ENCODE measurements at regions of chr3 and their contacts with region 1.

Region 1: DNA sequence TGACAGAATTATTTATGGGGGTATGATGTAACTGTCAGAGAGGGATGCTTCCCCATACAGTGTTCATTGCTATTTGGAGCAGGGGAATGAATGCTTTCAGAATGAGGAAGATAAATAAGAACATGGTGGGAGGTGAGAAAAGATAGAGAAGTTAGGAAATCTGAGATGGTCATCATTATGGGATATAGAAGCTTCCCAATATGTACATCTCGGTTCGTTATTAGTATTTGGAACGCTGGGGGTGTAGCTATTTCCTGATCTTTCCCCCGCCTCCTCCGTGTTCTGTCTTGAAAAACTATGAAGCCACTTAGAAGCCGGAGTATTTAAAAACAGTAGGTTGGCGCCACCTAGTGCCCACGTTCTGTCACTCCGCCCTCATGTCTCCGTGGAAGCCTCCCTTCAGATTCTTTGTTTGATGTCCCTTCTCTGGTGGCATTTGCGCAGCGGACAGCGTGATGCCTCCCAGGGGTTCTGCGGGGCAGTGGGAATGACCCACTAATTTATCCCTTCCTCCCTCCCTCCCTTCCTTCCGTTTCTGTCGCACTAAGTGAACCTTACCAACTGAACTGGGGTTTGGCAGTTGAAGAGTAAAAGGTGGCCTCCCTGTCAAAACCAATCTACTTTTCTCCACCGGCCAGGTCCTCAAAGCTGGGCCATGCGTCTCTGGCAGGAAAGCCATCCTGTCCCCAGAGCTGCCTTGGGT is 184.5 kb downstream of the FEZF2 start:
- DNase-seq: peak; percentile 7
- ATAC-seq: peak; percentile 93
- H3K4me3 ChIP-seq: no peak overlapping the region
- H3K27ac ChIP-seq: no peak overlapping the region
- H3K4me1 ChIP-seq: no peaks in the 10 kb centered on the region
- H3K27me3 ChIP-seq: no peaks in the 10 kb centered on the region
- CTCF ChIP-seq: peak; percentile 54 to 85 (median 70); a peak in 5 of 6 replicates
- POLR2A ChIP-seq: no peak
- RAD21 ChIP-seq: peak; percentile 84

Region 2: DNA sequence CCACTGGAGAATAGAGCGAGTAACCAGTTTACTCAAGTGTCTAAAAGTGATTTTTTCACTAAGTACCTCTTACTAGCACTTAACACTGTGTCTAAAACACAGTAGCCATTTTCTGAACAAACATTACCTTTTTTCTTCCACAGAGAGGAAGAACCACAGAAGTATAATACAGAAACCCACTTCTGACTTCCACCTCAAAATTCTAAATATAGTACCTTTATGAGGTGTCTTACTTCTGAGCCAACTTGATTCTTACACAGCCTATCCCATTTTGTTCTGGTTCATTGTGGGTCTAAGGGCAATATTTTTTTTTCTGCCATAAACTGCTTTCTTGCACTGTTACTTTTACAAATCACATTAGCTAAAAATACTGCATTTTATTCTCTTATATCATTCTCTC is 1758.6 kb before region 1 on chr3:
- CTCF ChIA-PET with region 1: no interaction called
- POLR2A ChIA-PET with region 1: no interaction called
- RAD21 ChIA-PET with region 1: no interaction called
- intact Hi-C with region 1: no loop called
- DNase-seq: no peak
- ATAC-seq: no peak
- H3K4me3 ChIP-seq: no peak overlapping the region
- H3K27ac ChIP-seq: no peak overlapping the region
- H3K4me1 ChIP-seq: no peaks in the 10 kb centered on the region
- H3K27me3 ChIP-seq: no peaks in the 10 kb centered on the region
- CTCF ChIP-seq: no peak
- POLR2A ChIP-seq: no peak
- RAD21 ChIP-seq: no peak

Region 3: GRCh38 chr3:61381745-61382392 is 807.0 kb before region 1 on chr3:
- CTCF ChIA-PET with region 1: interaction called, 6 read pairs
- POLR2A ChIA-PET with region 1: no interaction called
- RAD21 ChIA-PET with region 1: interaction called in 1 of 2 experiments, 3 read pairs
- intact Hi-C with region 1: loop called (anchors 5 kb)
- DNase-seq: peak; percentile 48
- ATAC-seq: peak; percentile 98
- H3K4me3 ChIP-seq: no peak overlapping the region
- H3K27ac ChIP-seq: no peak overlapping the region
- H3K4me1 ChIP-seq: no peaks in the 10 kb centered on the region
- H3K27me3 ChIP-seq: peaks cover 9% of the 10 kb centered on the region; the same call in 1 of the 2 replicates
- CTCF ChIP-seq: peak; percentile 37 to 86 (median 59); a peak in 5 of 6 replicates
- POLR2A ChIP-seq: no peak
- RAD21 ChIP-seq: peak; percentile 67

Region 4: DNA sequence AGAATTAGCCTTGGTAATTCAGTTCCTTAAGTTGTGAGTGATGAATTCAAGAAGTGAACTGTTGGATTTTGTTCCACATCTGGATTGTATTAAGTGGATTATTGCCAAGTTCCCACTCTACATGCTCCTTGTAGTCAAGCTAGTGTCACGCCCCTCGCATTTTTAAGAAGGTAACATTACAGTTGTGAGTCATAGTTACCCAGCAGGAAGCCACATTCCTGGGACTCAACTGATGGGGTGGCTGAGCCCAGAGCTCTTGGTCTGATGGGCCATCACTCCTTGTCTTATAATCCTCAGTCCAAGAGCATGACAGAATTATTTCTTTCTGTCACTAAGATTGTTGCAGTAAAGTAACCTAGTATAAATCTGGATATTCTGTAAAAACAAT is 524.7 kb before region 1 on chr3:
- CTCF ChIA-PET with region 1: no interaction called
- POLR2A ChIA-PET with region 1: no interaction called
- RAD21 ChIA-PET with region 1: no interaction called
- intact Hi-C with region 1: loop called (anchors 10 kb)
- DNase-seq: peak; percentile 76
- ATAC-seq: peak; percentile 97
- H3K4me3 ChIP-seq: peak overlapping the region in 1 of 2 experiments; percentile 35; a peak in 2 of 4 replicates
- H3K27ac ChIP-seq: peak overlapping the region; percentile 38; the same call in 1 of the 2 replicates
- H3K4me1 ChIP-seq: peaks cover 21 to 25% of the 10 kb centered on the region in 2 experiments
- H3K27me3 ChIP-seq: no peaks in the 10 kb centered on the region
- CTCF ChIP-seq: no peak
- POLR2A ChIP-seq: no peak
- RAD21 ChIP-seq: 0 out of 2 replicates have a peak, but pooled peaks have one; percentile 5

Region 5: GRCh38 chr3:62252438-62253157 is 63.8 kb after region 1 on chr3:
- CTCF ChIA-PET with region 1: no interaction called
- POLR2A ChIA-PET with region 1: no interaction called
- RAD21 ChIA-PET with region 1: no interaction called
- intact Hi-C with region 1: no loop called
- DNase-seq: no peak
- ATAC-seq: no peak
- H3K4me3 ChIP-seq: no peak overlapping the region
- H3K27ac ChIP-seq: no peak overlapping the region
- H3K4me1 ChIP-seq: no peaks in the 10 kb centered on the region
- H3K27me3 ChIP-seq: no peaks in the 10 kb centered on the region
- CTCF ChIP-seq: no peak
- POLR2A ChIP-seq: no peak
- RAD21 ChIP-seq: no peak